ENCODE measurements at regions of chr1 and their contacts with region 1.

Region 1: DNA sequence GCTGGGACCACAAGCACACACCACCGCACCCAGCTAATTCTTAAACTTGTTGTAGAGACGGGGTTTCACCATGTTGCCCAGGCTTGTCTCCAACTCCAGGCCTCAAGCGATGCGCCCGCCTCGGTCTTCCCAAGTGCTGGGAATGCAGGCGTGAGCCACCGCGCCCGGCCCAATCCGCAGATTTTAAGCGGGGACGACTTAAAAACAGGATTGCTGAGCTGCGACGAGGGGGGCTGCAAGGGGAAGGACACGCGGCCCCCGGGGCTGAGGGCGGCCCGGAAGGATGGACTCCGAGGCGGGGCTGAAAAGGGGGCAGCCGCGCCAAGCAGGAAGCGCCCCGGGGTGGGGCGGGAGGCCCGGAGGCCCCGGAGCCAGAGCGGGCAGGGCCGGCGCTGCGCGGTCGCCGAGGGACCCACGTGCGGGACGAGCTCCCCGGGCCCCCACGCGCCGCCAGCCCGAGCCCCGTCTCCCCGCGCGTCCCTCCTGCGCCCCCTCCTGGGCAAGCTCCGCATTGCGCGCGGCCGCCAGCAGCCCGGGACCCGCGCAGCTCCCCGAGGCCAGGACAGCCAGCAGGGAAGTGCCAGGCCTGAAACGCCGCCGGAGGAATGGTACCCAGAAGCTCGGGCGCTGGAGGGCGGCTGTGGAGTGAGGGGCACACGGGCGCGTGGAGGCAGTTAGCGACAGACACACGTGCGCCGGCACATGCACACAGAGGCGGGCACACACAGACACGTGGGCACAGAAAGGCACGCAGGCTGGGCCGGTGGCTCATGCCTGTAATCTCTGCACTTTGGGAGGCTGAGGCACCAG is 5.5 kb upstream of the PRKCZ start:
- DNase-seq: peak; percentile 33
- ATAC-seq: peak; percentile 5
- H3K4me3 ChIP-seq: peak overlapping the region in 2 of 3 experiments; percentile 30 to 58; a peak in 3 of 6 replicates
- H3K27ac ChIP-seq: no peak overlapping the region
- H3K4me1 ChIP-seq: peaks cover 66% of the 10 kb centered on the region
- H3K27me3 ChIP-seq: peaks cover 7 to 31% of the 10 kb centered on the region in 2 experiments
- CTCF ChIP-seq: peak; percentile 85
- EP300 ChIP-seq: no peak
- POLR2A ChIP-seq: no peak
- RAD21 ChIP-seq: peak; percentile 94

Region 2: DNA sequence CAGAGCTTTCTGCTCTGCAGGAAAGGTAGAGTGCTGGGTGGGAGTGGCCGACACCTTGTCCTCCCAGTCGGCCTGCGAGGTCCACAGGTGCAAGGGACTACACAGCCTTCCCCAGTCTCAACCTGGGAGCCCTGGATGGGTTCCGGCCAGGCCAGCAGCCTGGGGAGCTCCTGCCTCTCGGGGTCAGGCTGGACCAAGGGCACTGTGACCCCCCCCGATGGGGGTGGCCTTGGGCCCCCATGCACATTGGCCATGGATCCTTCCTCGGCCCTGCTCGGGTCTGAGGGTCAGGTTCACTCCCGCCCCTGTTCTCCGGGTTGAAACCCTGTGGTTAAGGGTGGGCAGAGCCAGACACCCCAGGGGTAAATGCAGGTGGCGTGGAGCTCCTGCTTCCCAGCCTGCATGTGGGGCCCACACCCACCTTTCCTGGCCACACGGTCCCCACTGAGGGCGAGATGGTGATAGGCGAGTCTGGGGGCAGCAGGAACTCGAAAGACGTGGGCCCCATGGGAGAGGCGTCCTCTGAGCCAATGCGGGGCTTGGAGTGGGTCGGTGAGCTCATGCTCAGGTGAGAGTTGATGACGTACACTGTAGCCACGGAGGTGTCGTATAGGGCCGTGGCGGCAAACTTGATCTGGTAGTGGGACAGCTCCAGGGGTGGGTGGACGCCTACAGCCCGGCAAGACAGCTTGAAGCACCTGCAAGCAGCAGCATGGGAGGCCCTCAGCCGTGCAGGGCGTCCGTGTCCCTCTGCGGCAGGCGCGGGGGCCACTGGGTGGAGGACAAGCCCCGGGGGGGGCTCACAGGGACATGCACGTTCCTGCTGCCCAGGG is 114.9 kb before region 1 on chr1:
- CTCF ChIA-PET with region 1: no interaction called
- POLR2A ChIA-PET with region 1: no interaction called
- in situ Hi-C with region 1: no loop called
- intact Hi-C with region 1: loop called (anchors 2 kb)
- DNase-seq: no peak
- ATAC-seq: peak; percentile 13
- H3K4me3 ChIP-seq: no peak overlapping the region; a peak in 1 of 6 replicates
- H3K27ac ChIP-seq: no peak overlapping the region
- H3K4me1 ChIP-seq: peaks cover 19% of the 10 kb centered on the region
- H3K27me3 ChIP-seq: peaks cover 22 to 42% of the 10 kb centered on the region in 2 experiments; a peak in 4 of 5 replicates
- CTCF ChIP-seq: no peak
- EP300 ChIP-seq: no peak
- POLR2A ChIP-seq: no peak
- RAD21 ChIP-seq: no peak

Region 3: GRCh38 chr1:1943834-1944570 is 100.7 kb before region 1 on chr1:
- CTCF ChIA-PET with region 1: interaction called, 7 read pairs
- POLR2A ChIA-PET with region 1: interaction called, 13 read pairs
- in situ Hi-C with region 1: no loop called
- intact Hi-C with region 1: no loop called
- DNase-seq: peak; percentile 61
- ATAC-seq: peak; percentile 77
- H3K4me3 ChIP-seq: peak overlapping the region; percentile 67 to 87 (median 67)
- H3K27ac ChIP-seq: peak overlapping the region; percentile 91
- H3K4me1 ChIP-seq: peaks cover 80% of the 10 kb centered on the region
- H3K27me3 ChIP-seq: no peaks in the 10 kb centered on the region
- CTCF ChIP-seq: peak; percentile 100
- EP300 ChIP-seq: no peak
- POLR2A ChIP-seq: no peak
- RAD21 ChIP-seq: peak; percentile 70

Region 4: GRCh38 chr1:1959840-1960479 is 84.8 kb before region 1 on chr1:
- CTCF ChIA-PET with region 1: interaction called, 30 read pairs
- POLR2A ChIA-PET with region 1: interaction called, 3 read pairs
- in situ Hi-C with region 1: loop called (anchors 5 kb)
- intact Hi-C with region 1: loop called (anchors 5 kb)
- DNase-seq: peak; percentile 81
- ATAC-seq: peak; percentile 81
- H3K4me3 ChIP-seq: peak overlapping the region in 2 of 3 experiments; percentile 23 to 51; a peak in 2 of 6 replicates
- H3K27ac ChIP-seq: no peak overlapping the region
- H3K4me1 ChIP-seq: peaks cover 86% of the 10 kb centered on the region
- H3K27me3 ChIP-seq: peaks cover 2 to 57% of the 10 kb centered on the region in 2 experiments; a peak in 4 of 5 replicates
- CTCF ChIP-seq: peak; percentile 98
- EP300 ChIP-seq: peak in 1 of 2 experiments; percentile 62; a peak in 1 of 4 replicates
- POLR2A ChIP-seq: no peak; a peak in 1 of 4 replicates
- RAD21 ChIP-seq: peak; percentile 90

Region 5: GRCh38 chr1:2085080-2085479 is 40.4 kb after region 1 on chr1:
- CTCF ChIA-PET with region 1: no interaction called
- POLR2A ChIA-PET with region 1: no interaction called
- in situ Hi-C with region 1: no loop called
- intact Hi-C with region 1: no loop called
- DNase-seq: no peak
- ATAC-seq: no peak
- H3K4me3 ChIP-seq: no peak overlapping the region
- H3K27ac ChIP-seq: no peak overlapping the region
- H3K4me1 ChIP-seq: no peaks in the 10 kb centered on the region
- H3K27me3 ChIP-seq: no peaks in the 10 kb centered on the region
- CTCF ChIP-seq: no peak
- EP300 ChIP-seq: no peak
- POLR2A ChIP-seq: no peak
- RAD21 ChIP-seq: no peak